ENCODE measurements at regions of chr19 and their contacts with region 1.

Region 1: DNA sequence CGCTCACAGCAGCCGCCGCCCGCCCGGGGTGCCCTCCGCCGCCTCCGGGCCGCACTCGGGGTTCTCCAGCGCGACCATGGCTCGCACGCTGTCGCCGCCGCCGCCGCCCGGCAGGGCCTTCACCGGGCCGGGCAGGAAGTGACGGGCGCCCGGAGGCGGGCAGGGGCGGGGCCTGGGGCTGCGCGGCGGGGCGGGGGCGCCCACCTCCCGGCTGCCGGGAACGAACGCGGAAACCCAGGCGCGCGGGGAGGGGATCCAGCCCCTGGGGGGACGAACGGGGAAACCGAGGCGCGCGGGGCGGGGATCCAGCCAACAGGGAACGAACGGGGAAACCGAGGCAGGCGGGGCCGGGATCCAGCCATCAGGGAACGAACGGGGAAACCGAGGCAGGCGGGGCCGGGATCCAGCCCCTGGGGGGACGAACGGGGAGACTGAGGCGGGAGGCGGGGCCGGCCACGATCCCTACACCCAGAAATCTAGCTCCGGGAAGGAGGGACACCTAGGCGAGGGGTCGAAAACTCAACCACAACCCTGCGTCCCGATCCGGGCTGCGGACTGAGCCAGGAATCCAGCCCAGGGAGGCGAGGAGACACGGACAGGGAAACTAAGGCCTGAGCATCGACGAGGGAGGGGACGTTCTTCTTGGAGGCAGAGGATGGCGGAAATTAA is at the start of gene R3HDM4:
- DNase-seq: peak; percentile 80
- H3K4me3 ChIP-seq: peak within 1 kb of the TSS; percentile 82 to 92
- H3K27ac ChIP-seq: peak within 1 kb of the TSS; percentile 92 to 93
- H3K4me1 ChIP-seq: peaks cover 11% of the 10 kb centered on the region
- H3K27me3 ChIP-seq: peaks cover 7% of the 10 kb centered on the region
- CTCF ChIP-seq: no peak
- POLR2A ChIP-seq: peak; percentile 63
- total RNA-seq, gene R3HDM4: 36.9 to 58.7 TPM

Region 2: DNA sequence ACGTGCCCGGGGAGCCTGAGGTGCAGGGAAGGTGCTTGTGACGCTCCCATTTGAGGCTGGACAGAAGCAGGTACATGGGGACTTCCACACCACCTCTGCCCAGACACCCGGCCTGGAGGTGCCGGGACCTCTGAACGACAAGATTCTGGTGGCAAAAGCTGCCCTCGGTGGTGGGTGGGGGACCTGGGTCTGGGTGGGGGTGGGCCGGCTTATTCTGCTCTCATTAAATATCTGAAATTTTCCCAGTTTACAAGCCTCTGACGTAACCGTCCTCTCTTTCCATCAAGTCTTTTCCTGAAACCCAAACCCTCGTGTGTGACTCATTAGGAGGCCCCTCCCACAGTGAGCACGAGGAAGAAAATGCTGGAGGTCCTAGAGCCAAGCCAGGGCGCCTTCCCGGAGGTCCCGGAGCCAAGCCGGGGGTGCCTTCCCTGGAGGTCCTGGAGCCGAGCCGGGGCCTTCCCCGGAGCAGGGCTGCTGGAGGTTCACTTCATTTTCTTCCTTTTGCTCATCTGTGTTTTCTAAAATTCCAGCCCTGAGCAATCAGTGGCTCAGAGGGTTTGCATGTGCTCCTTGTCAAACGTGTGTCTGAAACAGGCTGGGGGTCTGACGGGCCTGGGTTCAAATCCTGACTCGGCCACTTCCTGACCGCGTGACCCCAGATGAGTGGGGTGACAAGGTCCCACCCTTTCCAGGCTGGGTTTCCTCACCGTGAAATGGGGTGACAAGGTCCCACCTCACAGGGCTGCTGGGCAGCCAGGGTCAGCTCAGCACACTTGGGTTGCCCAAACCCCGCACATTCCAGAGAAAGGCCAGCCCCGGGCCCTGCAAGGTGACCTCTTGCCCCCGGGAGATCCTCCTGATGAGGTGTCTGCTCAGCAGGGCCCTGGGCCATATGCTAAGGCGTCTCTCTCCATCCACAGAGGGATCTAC is 43.7 kb before region 1 on chr19:
- intact Hi-C with region 1: loop called (anchors 2 kb)
- DNase-seq: no peak
- H3K4me3 ChIP-seq: no peak overlapping the region
- H3K27ac ChIP-seq: peak overlapping the region; percentile 69 to 74
- H3K4me1 ChIP-seq: no peaks in the 10 kb centered on the region
- H3K27me3 ChIP-seq: no peaks in the 10 kb centered on the region
- CTCF ChIP-seq: no peak
- POLR2A ChIP-seq: peak; percentile 20

Region 3: GRCh38 chr19:996051-996838 is 83.0 kb after region 1 on chr19:
- intact Hi-C with region 1: no loop called
- DNase-seq: no peak
- H3K4me3 ChIP-seq: no peak overlapping the region
- H3K27ac ChIP-seq: no peak overlapping the region
- H3K4me1 ChIP-seq: peaks cover 6% of the 10 kb centered on the region
- H3K27me3 ChIP-seq: peaks cover 11% of the 10 kb centered on the region
- CTCF ChIP-seq: no peak
- POLR2A ChIP-seq: no peak

Region 4: GRCh38 chr19:1141944-1142343 is 228.7 kb after region 1 on chr19:
- intact Hi-C with region 1: no loop called
- DNase-seq: no peak
- H3K4me3 ChIP-seq: no peak overlapping the region
- H3K27ac ChIP-seq: no peak overlapping the region
- H3K4me1 ChIP-seq: no peaks in the 10 kb centered on the region
- H3K27me3 ChIP-seq: no peaks in the 10 kb centered on the region
- CTCF ChIP-seq: no peak
- POLR2A ChIP-seq: no peak

Measured in prostate gland (tissue), 2 donors.